Naive thymus-derived CD4-positive, alpha-beta T cell (primary cell): ENCODE measurements at regions of chr11 and their contacts with region 1.

Region 1: DNA sequence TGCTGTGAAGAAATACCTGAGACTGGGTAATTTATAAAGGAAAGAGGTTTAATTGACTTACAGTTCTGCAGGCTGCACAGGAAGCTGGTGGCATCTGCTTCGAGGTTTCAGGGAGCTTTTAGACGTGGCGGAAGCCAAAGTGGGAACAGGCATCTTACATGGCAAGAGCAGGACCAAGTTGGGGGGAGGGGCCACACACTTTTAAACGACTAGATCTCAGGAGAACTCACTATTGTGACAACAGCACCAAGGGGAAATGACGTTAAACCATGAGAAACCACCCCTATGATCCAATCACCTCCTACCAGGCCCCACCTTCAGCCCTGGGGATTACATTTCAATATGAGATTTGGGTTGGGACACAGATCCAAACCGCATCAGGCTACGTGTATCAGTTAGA is 11.1 kb upstream of the SCGB1D4 start:
- DNase-seq: no peak
- ATAC-seq: no peak
- H3K4me3 ChIP-seq: no peak overlapping the region
- H3K4me3 Mint-ChIP-seq: peak overlapping the region in 1 of 10 donors; percentile 5
- H3K27ac ChIP-seq: no peak overlapping the region
- H3K27ac Mint-ChIP-seq: no peak overlapping the region
- H3K4me1 ChIP-seq: no peaks in the 10 kb centered on the region
- H3K4me1 Mint-ChIP-seq: peaks cover 0 to 16% (median 13%) of the 10 kb centered on the region in 7 donors
- H3K27me3 ChIP-seq: no peaks in the 10 kb centered on the region
- H3K27me3 Mint-ChIP-seq: peaks cover 14 to 61% (median 42%) of the 10 kb centered on the region in 5 donors

Region 2: DNA sequence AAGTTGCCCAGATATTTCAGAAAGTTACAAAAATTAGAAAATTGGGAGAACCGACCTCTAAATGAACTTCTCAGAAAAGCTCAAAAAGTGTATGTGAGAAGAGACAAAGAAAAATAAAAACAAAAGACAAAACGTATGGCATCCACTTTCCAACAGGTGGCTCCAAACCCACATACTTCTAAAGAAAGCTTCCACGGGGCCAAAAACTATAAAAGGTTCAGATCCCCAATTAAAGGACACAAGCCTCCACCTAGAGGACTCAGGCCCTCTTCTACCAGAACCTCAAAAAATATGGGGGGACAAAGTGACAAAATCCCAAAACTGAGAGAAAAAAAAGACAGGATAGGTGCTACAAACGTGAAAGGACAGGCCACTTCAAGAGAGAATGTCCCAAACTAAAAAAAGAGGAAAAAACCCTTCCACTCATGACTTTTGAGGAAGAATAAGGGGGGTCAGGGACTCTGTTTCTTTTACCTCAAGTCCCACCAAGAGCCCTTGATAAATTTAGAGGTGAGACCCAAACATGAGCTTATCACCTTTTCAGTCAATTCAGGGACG is 92.7 kb before region 1 on chr11:
- CTCF ChIA-PET with region 1: no interaction called
- POLR2A ChIA-PET with region 1: no interaction called
- intact Hi-C with region 1: loop called (anchors 1 to 5 kb)
- DNase-seq: no peak
- ATAC-seq: no peak
- H3K4me3 ChIP-seq: no peak overlapping the region
- H3K4me3 Mint-ChIP-seq: no peak overlapping the region
- H3K27ac ChIP-seq: no peak overlapping the region
- H3K27ac Mint-ChIP-seq: no peak overlapping the region
- H3K4me1 ChIP-seq: no peaks in the 10 kb centered on the region
- H3K4me1 Mint-ChIP-seq: no peaks in the 10 kb centered on the region
- H3K27me3 ChIP-seq: no peaks in the 10 kb centered on the region
- H3K27me3 Mint-ChIP-seq: peaks cover 14 to 42% (median 24%) of the 10 kb centered on the region in 5 donors

Region 3: DNA sequence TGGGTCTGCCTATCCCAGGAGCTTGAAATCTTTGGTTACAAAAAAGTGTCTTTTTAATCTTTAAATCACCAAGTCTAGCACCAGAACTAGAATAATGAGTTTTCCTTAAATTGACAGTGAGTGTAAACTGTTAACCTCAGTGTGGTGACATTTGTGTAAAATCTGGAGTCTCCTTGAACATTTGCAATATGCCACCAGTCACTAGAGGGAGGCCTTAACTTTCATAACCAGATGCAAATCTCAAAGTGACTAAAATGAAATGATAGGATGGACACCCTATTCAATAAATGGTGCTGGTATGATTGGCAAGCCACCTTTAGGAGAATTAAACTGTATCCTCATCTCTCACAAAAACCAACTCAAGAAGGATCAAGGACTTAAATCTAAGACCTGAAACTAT is 76.3 kb before region 1 on chr11:
- CTCF ChIA-PET with region 1: interaction called, 3 read pairs
- POLR2A ChIA-PET with region 1: no interaction called
- intact Hi-C with region 1: loop called (anchors 2 to 5 kb)
- DNase-seq: no peak
- ATAC-seq: no peak
- H3K4me3 ChIP-seq: no peak overlapping the region
- H3K4me3 Mint-ChIP-seq: no peak overlapping the region
- H3K27ac ChIP-seq: no peak overlapping the region
- H3K27ac Mint-ChIP-seq: no peak overlapping the region
- H3K4me1 ChIP-seq: no peaks in the 10 kb centered on the region
- H3K4me1 Mint-ChIP-seq: no peaks in the 10 kb centered on the region
- H3K27me3 ChIP-seq: no peaks in the 10 kb centered on the region
- H3K27me3 Mint-ChIP-seq: peaks cover 21 to 51% (median 37%) of the 10 kb centered on the region in 5 donors

Region 4: GRCh38 chr11:62264004-62264403 is 46.0 kb before region 1 on chr11:
- CTCF ChIA-PET with region 1: no interaction called
- POLR2A ChIA-PET with region 1: no interaction called
- intact Hi-C with region 1: no loop called
- DNase-seq: no peak
- ATAC-seq: no peak
- H3K4me3 ChIP-seq: no peak overlapping the region
- H3K4me3 Mint-ChIP-seq: no peak overlapping the region
- H3K27ac ChIP-seq: no peak overlapping the region
- H3K27ac Mint-ChIP-seq: no peak overlapping the region
- H3K4me1 ChIP-seq: no peaks in the 10 kb centered on the region
- H3K4me1 Mint-ChIP-seq: peaks cover 0 to 7% (median 0%) of the 10 kb centered on the region in 7 donors
- H3K27me3 ChIP-seq: no peaks in the 10 kb centered on the region
- H3K27me3 Mint-ChIP-seq: peaks cover 4 to 33% (median 18%) of the 10 kb centered on the region in 5 donors